ENCODE measurements at regions of chr5 and their contacts with region 1.

Region 1: DNA sequence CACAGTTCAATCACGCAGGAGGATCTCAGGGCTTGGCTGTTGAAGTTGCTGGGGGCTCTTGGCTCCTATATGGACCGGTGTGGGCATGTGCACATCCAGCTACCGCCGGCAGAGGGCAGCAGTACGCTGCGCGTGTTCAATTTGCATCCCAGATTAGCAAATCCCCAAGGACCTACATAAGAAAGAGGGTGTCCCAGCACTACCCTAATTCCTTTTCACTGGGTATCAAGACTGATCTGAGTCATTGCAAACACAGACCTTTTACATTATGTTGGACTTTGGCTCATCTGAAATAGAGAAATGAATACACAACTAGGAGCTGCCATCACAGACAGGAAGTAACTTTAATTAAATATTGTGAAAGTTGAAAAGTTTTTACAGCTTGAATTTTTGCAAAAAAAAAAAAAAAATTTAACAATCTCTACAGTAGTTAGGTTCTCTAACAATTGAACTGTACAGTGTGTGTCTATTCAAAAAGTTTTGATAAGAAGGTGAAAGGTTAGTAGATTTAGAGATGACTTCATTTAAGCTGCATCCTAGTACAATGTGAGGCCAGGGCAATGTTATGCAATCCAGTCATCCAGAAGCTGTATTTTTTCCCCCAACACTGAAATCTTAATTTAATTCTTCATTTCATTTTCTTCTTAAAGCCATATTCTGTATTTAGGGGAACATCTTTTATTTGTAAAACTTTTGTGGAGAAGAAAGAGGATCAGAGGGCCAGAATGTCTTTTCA is 404.0 kb downstream of the EBF1 start:
- DNase-seq: peak; percentile 45
- H3K4me3 ChIP-seq: no peak overlapping the region
- CTCF ChIP-seq: peak; percentile 87

Region 2: GRCh38 chr5:158074992-158075769 is 620.6 kb before region 1 on chr5:
- CTCF ChIA-PET with region 1: interaction called, 22 read pairs
- POLR2A ChIA-PET with region 1: no interaction called
- DNase-seq: peak; percentile 19
- H3K4me3 ChIP-seq: peak overlapping the region; percentile 2; the same call in 1 of the 2 replicates
- CTCF ChIP-seq: peak; percentile 79

Region 3: DNA sequence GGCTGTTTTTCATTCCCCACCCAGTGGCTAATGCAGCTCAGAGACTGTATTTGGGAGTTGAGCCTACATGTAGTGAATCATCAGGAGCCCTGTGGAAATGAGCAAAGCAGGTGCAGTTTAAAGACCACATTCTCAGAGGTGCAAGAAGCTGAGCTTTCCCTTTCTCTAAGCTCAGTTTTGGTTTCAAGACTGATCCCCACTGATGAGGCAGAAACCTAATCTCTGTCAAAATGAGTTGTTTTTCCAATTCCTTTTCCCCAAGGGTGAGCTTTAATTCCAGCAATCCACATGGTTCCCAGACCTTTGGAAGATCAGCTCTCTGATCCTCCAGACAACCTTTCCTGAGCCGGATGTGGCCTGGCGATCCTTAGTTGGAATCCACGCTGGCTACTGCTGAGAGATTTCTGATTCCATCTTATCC is 16.5 kb before region 1 on chr5:
- CTCF ChIA-PET with region 1: interaction called, 33 read pairs
- POLR2A ChIA-PET with region 1: no interaction called
- DNase-seq: no peak
- H3K4me3 ChIP-seq: no peak overlapping the region
- CTCF ChIP-seq: no peak

Region 4: DNA sequence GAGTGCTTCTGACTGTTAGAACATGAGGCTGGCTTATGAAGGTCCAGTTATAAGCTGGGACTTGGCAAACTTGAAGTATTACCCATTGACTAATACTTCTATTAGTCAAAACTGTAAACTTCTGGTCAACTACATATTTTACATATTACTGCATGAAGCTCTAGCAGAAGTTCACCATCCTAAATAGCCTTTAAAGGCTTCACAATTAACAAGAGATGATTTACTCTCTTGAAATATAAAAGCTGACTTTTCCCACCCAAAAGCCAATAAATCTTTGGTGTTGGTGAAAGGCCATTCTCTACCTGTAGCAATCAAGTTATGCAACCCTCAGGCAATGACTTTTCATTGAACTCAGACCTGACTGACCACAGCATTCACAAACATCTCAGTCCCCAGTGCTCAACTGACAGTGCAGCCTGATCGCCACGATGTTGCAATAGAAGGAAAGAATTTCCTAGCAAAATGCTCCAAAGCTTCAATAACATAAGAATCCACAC is 58.3 kb after region 1 on chr5:
- CTCF ChIA-PET with region 1: interaction called, 14 read pairs
- POLR2A ChIA-PET with region 1: interaction called, 9 read pairs
- DNase-seq: peak; percentile 93
- H3K4me3 ChIP-seq: no peak overlapping the region
- CTCF ChIP-seq: no peak

Region 5: DNA sequence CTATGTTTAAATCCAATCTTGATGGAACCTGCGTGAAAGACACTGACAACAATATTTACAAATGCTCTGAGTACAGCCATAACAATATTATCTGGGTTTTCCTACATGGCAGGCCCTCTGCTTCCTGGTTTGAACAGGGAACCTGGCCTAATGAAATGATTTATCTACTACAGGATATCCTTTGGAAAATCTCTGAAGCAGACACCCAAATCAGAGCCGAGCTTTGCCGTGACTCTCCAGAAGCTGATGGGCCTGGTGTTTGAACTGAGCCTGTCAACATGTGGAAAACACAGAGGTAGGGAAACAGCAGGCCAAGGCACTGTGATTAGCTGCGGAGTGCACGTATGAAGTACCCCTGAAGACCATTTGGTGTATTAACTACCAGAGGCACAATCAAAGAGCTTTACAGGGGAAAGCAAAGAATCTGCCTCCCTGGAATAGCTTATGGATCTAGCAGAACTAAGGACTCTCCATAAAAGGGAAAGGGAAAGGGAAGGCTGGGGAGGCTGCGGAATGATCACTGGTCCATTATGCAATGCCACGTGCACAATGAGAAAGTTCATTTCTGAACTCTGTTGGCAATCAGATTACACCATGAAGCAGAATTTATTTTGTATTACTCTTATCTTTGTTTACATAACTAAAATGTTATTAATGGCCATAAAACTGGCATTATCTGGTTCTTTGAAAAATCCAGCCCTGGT is 82.0 kb after region 1 on chr5:
- CTCF ChIA-PET with region 1: no interaction called
- POLR2A ChIA-PET with region 1: no interaction called
- DNase-seq: no peak
- H3K4me3 ChIP-seq: no peak overlapping the region
- CTCF ChIP-seq: no peak

Region 6: GRCh38 chr5:159098603-159099436 is 403.1 kb after region 1 on chr5:
- CTCF ChIA-PET with region 1: interaction called, 462 read pairs
- POLR2A ChIA-PET with region 1: interaction called, 4 read pairs
- DNase-seq: no peak
- H3K4me3 ChIP-seq: peak overlapping the region; percentile 83
- CTCF ChIP-seq: no peak

Region 7: DNA sequence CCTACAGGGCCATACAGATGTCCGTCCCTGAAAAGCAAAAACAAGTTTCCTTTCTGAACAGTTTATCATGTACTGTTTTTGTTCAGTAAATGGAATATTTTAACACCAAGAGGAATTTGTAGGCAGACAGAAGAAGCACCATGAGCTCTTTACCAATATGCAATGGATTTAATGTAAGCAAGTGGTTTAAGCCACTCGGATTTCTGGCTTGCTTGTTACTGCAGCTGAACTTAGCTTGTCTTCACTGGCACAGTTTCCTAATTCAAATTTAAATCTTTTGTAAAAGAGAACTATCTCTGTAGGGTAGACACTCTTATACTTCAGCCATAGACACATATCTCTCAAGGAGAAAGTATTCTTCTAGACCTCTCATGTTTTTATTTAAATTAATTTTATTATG is 416.7 kb after region 1 on chr5:
- CTCF ChIA-PET with region 1: interaction called, 462 read pairs
- POLR2A ChIA-PET with region 1: interaction called, 9 read pairs
- DNase-seq: no peak
- H3K4me3 ChIP-seq: no peak overlapping the region
- CTCF ChIP-seq: no peak

Region 8: GRCh38 chr5:159133041-159133741 is 437.4 kb after region 1 on chr5:
- CTCF ChIA-PET with region 1: interaction called, 35 read pairs
- POLR2A ChIA-PET with region 1: no interaction called
- DNase-seq: peak; percentile 40
- H3K4me3 ChIP-seq: no peak overlapping the region
- CTCF ChIP-seq: peak; percentile 50

Measured in AG04449 (cell line).